Activated naive CD8-positive, alpha-beta T cell treated with anti-CD3 and anti-CD28 coated beads, Interleukin-2, amount 10 ng/mL, durations not matched to agents 7 days and 5 days (primary cell): ENCODE measurements at regions of chr22 and their contacts with region 1.

Region 1: GRCh38 chr22:37566903-37567820 is 6.9 kb downstream of the CDC42EP1 start:
- DNase-seq: peak; percentile 96
- ATAC-seq: peak; percentile 84
- H3K4me3 Mint-ChIP-seq: peak overlapping the region; percentile 69
- H3K27ac Mint-ChIP-seq: peak overlapping the region; percentile 89
- H3K4me1 Mint-ChIP-seq: peaks cover 27% of the 10 kb centered on the region
- H3K27me3 Mint-ChIP-seq: peaks cover 25% of the 10 kb centered on the region

Region 2: DNA sequence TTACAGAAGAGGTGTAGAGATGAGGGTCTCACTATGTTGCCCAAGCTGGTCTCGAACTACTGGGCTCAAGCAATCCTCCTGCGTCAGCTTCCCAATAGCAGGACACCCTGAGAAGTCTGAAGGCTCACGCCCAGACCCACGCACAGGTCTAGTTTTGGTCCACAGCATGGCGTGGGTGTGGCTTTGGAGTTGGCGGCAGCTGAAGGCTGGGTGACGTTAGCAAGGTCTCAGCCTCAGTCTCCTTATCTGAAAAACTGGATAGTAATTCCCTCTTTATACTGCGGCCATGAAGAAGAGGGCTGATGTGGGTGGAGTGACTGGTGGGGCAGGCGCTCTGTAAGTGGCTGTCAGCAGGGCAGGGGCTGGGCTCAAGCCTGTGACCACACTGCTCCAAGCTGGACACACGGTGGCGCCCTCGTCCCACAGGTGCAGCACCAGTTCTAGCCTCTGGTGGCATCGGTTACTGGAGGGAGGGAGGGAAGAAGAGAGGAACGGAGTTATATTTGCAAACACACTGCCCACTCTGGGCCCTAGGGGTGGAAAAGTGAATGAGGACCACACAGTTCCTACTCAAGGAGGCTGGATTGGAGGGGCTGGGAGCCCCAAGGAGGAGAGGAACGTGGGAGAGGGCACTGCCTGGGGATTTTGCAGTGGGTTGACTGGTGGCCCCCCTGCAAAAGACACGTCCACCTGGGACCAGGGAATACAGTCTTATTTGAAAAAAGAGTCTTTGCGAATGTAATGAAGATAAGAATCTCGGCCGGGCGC is 28.4 kb before region 1 on chr22:
- POLR2A ChIA-PET with region 1: interaction called, 70 read pairs
- DNase-seq: peak; percentile 92
- ATAC-seq: peak; percentile 100
- H3K4me3 Mint-ChIP-seq: peak overlapping the region; percentile 66
- H3K27ac Mint-ChIP-seq: peak overlapping the region; percentile 83
- H3K4me1 Mint-ChIP-seq: peaks cover 35% of the 10 kb centered on the region
- H3K27me3 Mint-ChIP-seq: peaks cover 36% of the 10 kb centered on the region

Region 3: DNA sequence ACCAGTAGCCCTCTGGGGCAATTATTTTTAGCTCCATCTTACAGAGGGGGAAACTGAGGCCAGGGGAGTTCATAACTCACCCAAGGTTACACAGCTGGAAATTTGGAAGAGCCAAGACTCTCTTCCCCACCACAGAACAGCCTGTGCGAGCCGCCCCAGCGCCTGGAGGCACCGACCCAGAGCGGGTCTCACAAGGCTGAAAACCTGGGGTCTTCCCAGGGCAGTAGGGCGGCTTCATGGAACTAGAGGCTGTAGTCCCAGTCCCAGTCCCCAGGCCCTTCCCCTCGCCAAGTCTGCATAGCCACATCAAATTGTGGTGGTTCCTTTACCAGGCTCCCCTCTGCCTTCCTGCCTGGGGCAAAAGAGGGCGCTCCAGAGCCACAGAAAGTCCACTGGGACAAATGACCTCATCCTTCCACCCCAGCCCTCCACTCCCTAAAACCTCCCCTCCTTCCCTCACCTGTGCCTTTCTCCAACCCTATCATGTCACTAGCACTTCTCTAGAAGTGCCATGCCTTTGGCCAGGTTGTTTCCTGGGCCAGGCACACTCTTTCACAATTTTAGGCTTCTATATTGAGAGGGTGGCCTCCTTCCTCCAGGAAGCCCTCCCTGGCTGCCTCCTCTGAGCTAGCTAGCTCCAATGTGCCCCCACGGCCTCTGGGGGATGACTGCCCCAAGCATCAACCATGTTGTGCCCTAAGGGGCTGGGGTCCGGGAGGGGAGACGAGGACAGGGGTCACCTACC is 22.0 kb before region 1 on chr22:
- POLR2A ChIA-PET with region 1: interaction called, 70 read pairs
- DNase-seq: peak; percentile 74
- ATAC-seq: peak; percentile 68
- H3K4me3 Mint-ChIP-seq: no peak overlapping the region
- H3K27ac Mint-ChIP-seq: peak overlapping the region; percentile 68
- H3K4me1 Mint-ChIP-seq: peaks cover 20% of the 10 kb centered on the region
- H3K27me3 Mint-ChIP-seq: peaks cover 23% of the 10 kb centered on the region